ENCODE measurements at regions of chr1 and their contacts with region 1.

Region 1: DNA sequence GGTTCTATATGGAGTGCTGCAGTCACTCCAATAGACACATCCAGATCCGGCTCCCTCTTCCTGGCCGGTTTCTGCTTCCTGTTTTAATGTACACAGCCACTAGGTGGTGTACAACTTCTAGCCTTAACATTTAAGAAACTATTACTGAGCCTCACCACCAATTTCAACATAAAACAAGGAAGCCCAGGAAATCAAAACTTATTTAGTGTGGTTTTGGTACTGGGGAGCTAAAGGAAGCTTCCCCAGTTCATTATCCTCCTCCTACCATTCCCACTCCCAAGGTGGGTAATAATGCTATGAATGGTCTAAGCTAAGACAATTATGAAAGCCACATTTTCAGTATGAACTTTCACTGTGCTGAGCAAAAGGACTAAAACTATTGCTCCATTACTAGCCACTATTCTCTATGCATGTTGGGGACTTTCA is 25.5 kb upstream of the MTMR11 start:
- DNase-seq: peak; percentile 57
- H3K4me3 Mint-ChIP-seq: no peak overlapping the region
- H3K27ac Mint-ChIP-seq: no peak overlapping the region
- H3K4me1 Mint-ChIP-seq: peaks cover 18% of the 10 kb centered on the region
- H3K27me3 Mint-ChIP-seq: no peaks in the 10 kb centered on the region

Region 2: GRCh38 chr1:149886396-149887195 is 75.5 kb before region 1 on chr1:
- CTCF ChIA-PET with region 1: interaction called, 14 read pairs
- DNase-seq: peak; percentile 90
- H3K4me3 Mint-ChIP-seq: no peak overlapping the region
- H3K27ac Mint-ChIP-seq: no peak overlapping the region
- H3K4me1 Mint-ChIP-seq: peaks cover 18% of the 10 kb centered on the region
- H3K27me3 Mint-ChIP-seq: no peaks in the 10 kb centered on the region

Region 3: GRCh38 chr1:150051089-150051373 is 88.9 kb after region 1 on chr1:
- CTCF ChIA-PET with region 1: interaction called, 13 read pairs
- DNase-seq: no peak
- H3K4me3 Mint-ChIP-seq: no peak overlapping the region
- H3K27ac Mint-ChIP-seq: no peak overlapping the region
- H3K4me1 Mint-ChIP-seq: peaks cover 3% of the 10 kb centered on the region
- H3K27me3 Mint-ChIP-seq: peaks cover 27% of the 10 kb centered on the region

Region 4: DNA sequence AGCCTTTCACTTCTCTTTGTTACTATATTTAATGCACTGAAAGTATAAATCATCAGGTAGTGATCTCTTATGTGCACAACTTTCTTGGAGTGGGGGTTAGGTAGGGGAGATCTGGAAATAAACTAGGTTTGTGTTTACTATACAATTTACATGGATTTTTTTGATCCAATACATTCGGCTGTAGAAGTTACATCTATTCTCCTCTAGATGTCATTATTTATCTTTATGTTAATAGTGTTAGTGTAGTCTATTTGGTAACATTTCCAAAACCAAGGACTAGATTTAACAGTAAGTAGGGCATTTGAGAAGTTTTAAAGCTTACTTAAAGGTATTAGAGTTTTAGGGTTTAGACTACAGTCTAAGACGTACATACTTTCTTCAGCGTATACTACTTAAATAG is 110.8 kb after region 1 on chr1:
- CTCF ChIA-PET with region 1: interaction called, 13 read pairs
- DNase-seq: no peak
- H3K4me3 Mint-ChIP-seq: no peak overlapping the region
- H3K27ac Mint-ChIP-seq: peak overlapping the region; percentile 46
- H3K4me1 Mint-ChIP-seq: peaks cover 51% of the 10 kb centered on the region
- H3K27me3 Mint-ChIP-seq: no peaks in the 10 kb centered on the region

Region 5: GRCh38 chr1:150281837-150282653 is 319.9 kb after region 1 on chr1 and contains the start of gene CIART:
- CTCF ChIA-PET with region 1: no interaction called
- DNase-seq: peak; percentile 89
- H3K4me3 Mint-ChIP-seq: peak within 1 kb of the TSS; percentile 77
- H3K27ac Mint-ChIP-seq: peak within 1 kb of the TSS; percentile 82
- H3K4me1 Mint-ChIP-seq: peaks cover 29% of the 10 kb centered on the region
- H3K27me3 Mint-ChIP-seq: peaks cover 31% of the 10 kb centered on the region